Mammary epithelial cell (primary cell): ENCODE measurements at regions of chr12 and their contacts with region 1.

Region 1: DNA sequence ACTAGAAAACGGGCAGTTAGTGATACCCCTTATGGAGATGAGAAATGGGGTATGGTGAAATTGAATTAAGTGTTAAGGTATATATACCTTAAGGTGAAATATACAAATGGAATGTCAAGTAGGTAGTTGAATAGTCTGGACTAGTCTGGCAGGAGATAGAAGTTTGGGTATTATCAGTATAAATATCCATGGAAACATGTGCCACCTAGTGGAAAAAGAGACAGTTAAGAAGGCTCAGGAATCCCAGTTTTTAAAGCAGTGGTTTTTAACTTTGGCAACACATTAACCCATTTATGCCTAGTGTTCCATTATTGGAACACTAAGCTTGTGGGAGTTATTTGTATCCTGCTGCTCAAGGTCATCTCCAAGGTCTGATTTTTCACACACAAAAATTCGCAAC is 38.6 kb upstream of the TPH2 start:
- DNase-seq: peak; percentile 6
- H3K4me3 ChIP-seq: no peak overlapping the region
- H3K27ac ChIP-seq: no peak overlapping the region
- H3K4me1 ChIP-seq: no peaks in the 10 kb centered on the region
- H3K27me3 ChIP-seq: no peaks in the 10 kb centered on the region
- CTCF ChIP-seq: peak in 1 of 2 donors; percentile 35

Region 2: GRCh38 chr12:71780237-71780822 is 119.8 kb before region 1 on chr12:
- CTCF ChIA-PET with region 1: no interaction called
- dilution Hi-C with region 1: no loop called
- in situ Hi-C with region 1: no loop called
- intact Hi-C with region 1: loop called (anchors 1 kb)
- DNase-seq: peak; percentile 19
- H3K4me3 ChIP-seq: no peak overlapping the region
- H3K27ac ChIP-seq: no peak overlapping the region
- H3K4me1 ChIP-seq: no peaks in the 10 kb centered on the region
- H3K27me3 ChIP-seq: no peaks in the 10 kb centered on the region
- CTCF ChIP-seq: peak; percentile 66 to 70

Region 3: DNA sequence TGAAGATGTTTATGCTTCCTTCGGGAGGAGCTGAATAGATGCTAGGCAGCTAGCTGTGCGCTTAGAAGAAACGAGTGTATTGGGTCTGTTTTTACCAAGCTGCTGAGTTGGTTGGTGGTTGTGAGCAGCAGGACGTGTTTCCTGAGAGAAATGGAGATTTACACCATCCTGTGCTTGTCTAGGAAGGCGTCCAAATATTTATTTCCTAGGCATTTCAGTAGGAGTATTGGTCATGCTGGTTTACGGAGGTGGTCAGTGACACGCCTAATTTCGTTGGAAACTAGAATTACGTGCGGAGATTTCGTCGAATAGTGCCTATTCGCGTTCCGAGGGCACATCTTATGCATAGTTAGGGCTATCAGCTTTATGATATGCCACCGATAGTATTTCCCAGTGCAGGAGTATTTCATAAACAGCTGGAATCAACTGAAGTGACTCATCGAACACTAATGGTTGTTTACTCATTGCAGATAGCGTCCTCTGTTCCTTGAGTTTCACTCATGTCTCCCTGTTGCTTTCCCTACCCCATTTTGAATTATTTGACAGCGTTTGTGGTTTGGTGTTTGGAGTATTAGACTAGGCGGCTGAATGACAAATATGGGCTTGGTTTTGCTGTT is 59.8 kb before region 1 on chr12:
- CTCF ChIA-PET with region 1: no interaction called
- dilution Hi-C with region 1: no loop called
- in situ Hi-C with region 1: no loop called
- intact Hi-C with region 1: loop called (anchors 5 kb)
- DNase-seq: peak; percentile 86
- H3K4me3 ChIP-seq: peak overlapping the region; percentile 70 to 84 (median 75)
- H3K27ac ChIP-seq: peak overlapping the region; percentile 98
- H3K4me1 ChIP-seq: peaks cover 14% of the 10 kb centered on the region
- H3K27me3 ChIP-seq: no peaks in the 10 kb centered on the region
- CTCF ChIP-seq: no peak

Region 4: GRCh38 chr12:71857657-71858056 is 42.4 kb before region 1 on chr12:
- CTCF ChIA-PET with region 1: no interaction called
- dilution Hi-C with region 1: no loop called
- in situ Hi-C with region 1: no loop called
- intact Hi-C with region 1: no loop called
- DNase-seq: no peak
- H3K4me3 ChIP-seq: no peak overlapping the region
- H3K27ac ChIP-seq: no peak overlapping the region
- H3K4me1 ChIP-seq: no peaks in the 10 kb centered on the region
- H3K27me3 ChIP-seq: no peaks in the 10 kb centered on the region
- CTCF ChIP-seq: no peak

Region 5: DNA sequence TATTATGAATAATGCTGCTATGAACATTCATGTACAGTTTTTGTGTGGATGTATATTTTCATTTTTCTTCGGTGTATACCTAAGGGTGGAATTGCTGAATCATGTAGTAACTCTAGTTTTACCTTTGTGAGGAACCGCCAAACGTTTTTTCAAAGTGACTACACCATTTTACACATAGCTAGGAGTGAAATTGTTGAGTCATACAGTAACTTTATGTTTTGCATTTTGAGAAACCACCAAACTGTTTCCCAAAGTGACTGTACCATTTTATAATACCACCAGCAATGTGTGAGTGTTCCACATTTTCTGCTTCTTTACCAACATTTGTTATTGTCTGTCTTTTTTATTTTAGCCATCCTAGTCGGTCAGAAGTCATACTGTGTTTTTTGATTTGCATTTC is 35.5 kb after region 1 on chr12:
- CTCF ChIA-PET with region 1: no interaction called
- dilution Hi-C with region 1: no loop called
- in situ Hi-C with region 1: no loop called
- intact Hi-C with region 1: no loop called
- DNase-seq: peak; percentile 80
- H3K4me3 ChIP-seq: no peak overlapping the region
- H3K27ac ChIP-seq: no peak overlapping the region
- H3K4me1 ChIP-seq: no peaks in the 10 kb centered on the region
- H3K27me3 ChIP-seq: peaks cover 1% of the 10 kb centered on the region
- CTCF ChIP-seq: no peak